ENCODE measurements at regions of chr11 and their contacts with region 1.

Region 1: GRCh38 chr11:107573438-107573837 is 7.9 kb upstream of the ALKBH8 start:
- DNase-seq: no peak
- ATAC-seq: no peak
- H3K4me3 ChIP-seq: no peak overlapping the region
- H3K4me1 ChIP-seq: no peaks in the 10 kb centered on the region
- CTCF ChIP-seq: no peak

Region 2: DNA sequence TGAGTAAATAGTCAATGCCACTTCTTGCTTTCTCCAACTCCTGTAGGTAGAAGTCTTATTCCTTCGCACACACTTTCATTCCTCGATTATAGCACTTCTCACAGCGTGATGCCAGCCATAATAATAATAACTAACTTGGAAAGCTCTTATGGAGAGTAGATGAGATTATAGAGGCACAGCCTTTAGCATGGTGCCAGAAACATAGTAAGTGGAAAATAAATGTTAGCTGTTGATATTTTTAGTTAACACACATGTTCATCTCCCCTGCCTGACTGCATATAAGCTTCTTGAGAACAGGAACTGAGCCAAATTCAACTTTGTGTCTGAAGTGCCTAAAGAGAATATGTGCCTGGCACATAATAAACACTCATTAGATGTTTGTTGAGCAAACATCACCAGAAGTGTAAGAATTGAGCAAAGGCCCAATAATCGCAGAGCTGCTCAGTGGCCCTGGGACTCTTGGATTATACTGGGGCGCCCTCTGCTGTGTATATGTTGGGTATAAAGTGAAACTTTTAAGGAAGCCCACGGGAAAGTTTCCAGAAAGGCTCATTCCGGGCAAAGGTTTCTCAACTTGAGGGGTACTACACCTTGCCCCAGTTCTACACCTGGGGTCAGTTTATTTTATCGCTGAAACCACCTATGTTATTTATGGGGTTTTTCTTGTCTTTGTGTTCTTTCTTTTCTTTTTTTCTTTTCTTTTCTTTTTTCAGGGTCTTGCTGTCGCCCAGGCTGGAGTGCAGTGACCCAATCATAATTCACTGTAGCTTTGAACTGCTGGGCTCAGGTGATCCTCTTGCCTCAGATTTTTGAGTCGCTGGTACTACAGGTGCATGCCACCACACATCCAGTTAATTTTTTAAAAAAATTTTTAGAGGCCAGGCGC is 116.1 kb after region 1 on chr11:
- intact Hi-C with region 1: loop called (anchors 5 to 10 kb)
- DNase-seq: peak in 2 of 3 donors; percentile 46 to 91
- ATAC-seq: peak; percentile 69
- H3K4me3 ChIP-seq: no peak overlapping the region
- H3K4me1 ChIP-seq: peaks cover 4% of the 10 kb centered on the region
- CTCF ChIP-seq: no peak

Measured in mucosa of descending colon (tissue), 3 donors.